ENCODE measurements at regions of chr16 and their contacts with region 1.

Region 1: GRCh38 chr16:16127469-16128116 is 95.7 kb downstream of the ABCC6 start:
- DNase-seq: peak; percentile 60
- ATAC-seq: peak; percentile 85 to 87

Region 2: DNA sequence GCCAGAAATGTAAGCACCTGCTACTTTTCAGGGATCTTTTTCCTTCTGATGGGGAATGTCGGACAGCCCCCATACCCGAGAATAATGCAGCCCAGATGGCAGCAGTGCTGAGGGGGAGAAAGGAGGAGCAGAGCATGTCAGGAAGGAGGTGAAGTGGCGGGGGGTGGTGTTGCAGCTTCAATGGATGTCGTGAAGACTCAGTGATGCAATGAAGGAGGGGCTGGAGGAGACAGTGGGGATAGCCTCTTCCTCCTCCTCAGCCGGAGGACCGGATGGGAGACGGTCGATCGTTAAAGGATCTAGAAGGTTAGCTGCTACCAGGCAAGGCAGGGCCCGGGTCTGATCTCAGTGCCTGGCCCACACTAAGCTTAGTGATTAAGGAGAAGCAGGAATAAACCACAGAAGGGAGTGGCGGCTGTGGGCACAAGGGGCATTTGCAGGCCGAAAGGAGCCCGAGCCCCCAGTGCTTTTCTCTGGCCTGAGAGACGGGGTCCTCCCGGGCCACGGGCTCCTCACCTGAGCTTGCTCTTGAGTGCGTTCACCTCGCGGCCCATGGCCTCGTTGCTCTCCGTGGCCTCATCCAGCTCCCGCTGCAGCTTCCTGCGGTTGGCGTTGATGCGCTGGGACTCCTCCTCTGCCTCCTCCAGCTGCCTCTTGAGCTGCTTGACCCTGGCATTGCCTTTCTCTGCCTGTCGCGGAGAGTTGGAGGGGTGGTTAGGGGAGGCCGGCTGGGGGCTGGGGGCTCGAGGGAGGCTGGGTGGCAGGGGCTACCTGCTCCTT is 413.0 kb before region 1 on chr16:
- intact Hi-C with region 1: no loop called
- DNase-seq: no peak
- ATAC-seq: no peak

Region 3: DNA sequence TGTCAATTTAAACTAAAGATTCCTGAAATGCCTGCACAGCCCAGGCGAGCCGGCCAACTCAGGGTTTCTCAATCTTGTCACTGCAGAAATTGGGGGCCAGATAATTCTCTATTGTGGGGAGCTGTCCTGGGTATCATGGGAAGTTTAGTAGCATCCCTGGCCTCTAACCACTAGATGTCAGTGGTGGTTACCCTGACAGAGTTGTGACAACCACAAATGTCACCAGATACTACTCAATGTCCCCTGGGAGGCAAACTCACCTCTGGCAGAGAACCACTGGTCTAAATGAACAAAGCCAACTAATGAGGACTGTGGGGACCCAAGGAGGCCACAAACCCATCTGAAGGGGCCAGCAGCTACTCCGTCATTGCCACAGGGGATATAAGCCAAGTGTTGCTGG is 361.7 kb before region 1 on chr16:
- intact Hi-C with region 1: loop called in 1 of 2 experiments (anchors 5 kb)
- DNase-seq: no peak
- ATAC-seq: peak; percentile 58 to 76

Region 4: GRCh38 chr16:15874745-15875314 is 252.8 kb before region 1 on chr16:
- intact Hi-C with region 1: loop called (anchors 1 to 5 kb)
- DNase-seq: peak; percentile 51
- ATAC-seq: peak; percentile 77 to 78

Region 5: GRCh38 chr16:16021988-16022682 is 105.5 kb before region 1 on chr16:
- intact Hi-C with region 1: loop called in 1 of 2 experiments (anchors 10 kb)
- DNase-seq: peak; percentile 98
- ATAC-seq: peak; percentile 97 to 99

Region 6: DNA sequence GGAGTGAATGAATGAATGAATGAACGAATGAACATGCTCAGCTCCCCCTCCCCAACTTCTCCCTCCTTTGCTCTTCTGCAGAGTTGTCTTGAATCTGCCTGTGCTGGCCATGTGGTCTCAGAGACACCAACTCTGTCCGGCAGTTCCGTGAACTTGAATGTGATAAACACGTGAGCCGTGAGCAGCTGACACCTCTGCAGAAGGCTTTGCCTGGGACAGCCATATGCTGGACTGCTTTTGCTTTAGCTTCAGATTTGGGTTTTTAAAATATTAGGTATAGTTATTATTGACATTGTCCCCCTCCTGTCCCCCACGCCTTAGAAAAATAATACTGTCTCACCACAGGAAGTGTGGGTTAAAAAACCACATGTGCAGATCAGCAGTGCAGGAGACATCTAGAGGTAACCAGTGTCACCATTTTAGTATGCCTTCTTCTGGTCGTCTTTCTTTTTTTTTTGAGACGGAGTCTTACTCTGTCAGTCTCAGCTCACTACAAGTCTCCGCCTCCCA is 94.3 kb before region 1 on chr16:
- intact Hi-C with region 1: loop called (anchors 10 kb)
- DNase-seq: no peak
- ATAC-seq: peak in 1 of 2 donors; percentile 47

Region 7: GRCh38 chr16:16183562-16183961 is 56.0 kb after region 1 on chr16:
- intact Hi-C with region 1: no loop called
- DNase-seq: no peak
- ATAC-seq: no peak